Cardiac septum (tissue), 1 donor: ENCODE measurements at regions of chr7 and their contacts with region 1.

Region 1: DNA sequence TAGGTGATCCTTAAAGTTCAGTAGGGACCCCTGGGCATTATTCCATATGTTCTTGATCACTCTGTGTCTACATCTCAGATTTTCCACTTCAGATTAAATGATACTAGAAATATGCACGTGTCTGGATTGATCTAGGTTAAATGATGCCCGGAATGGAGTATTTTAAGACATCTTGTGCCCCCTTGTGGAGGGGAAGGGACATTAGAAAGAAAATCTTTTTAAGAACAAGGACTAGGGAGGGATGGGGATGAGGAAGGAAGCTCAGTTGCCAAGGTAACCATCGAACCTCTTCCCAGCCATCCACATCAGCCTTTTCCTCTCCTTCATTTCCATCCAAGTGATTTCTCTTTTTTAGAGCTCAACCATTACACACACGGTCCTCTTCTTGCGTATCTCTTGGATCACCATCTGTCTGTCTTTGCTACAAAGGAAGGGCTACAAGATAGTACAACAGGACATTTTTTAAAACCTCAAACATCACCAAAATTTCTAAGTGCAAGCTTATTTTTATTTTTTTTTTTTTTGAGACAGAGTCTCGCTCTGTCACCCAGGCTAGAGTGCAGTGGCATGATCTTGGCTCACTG is 40.5 kb downstream of the PRSS2 start:
- DNase-seq: no peak

Region 2: GRCh38 chr7:142632291-142633134 is 178.7 kb before region 1 on chr7:
- intact Hi-C with region 1: loop called (anchors 5 kb)
- DNase-seq: no peak

Region 3: DNA sequence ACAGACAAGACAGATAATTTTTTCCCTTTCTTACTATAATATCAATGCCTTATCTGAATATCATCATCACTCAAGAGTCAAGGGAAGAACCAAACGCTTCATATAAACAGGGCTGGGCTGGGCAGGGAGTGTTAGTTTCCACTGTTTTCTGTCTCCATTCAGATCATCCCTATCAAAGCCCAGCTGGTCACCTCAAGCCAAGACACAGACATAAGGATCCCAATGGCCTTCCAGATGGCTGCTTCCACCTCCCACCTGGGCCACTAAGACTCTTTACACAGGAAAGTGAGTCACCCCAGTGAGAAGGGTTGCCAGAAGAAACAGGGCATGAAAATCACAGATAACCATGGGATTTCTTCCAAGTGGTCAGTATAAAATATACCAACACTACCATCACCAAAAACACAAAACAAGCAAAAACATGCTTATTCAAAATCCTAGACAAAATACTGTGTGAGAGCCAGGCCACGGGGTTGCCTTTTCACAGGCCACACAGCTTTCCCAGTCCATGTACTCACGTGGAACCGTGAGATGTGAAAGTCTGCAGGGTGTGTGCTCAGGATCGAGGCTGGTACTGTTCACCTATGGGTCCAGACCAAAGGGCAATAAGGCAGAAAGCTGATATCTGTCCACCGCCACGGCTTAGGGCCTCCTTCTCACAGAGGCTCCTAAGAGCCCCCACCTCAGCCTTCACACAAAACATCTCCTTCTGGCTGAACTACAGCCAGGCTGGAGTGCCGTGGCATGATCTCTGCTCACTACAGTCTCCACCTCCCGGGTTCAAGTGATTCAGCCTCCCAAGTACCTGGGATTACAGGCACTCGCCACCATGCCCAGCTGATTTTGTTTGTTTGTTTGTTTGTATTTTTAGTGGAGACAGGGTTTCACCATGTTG is 56.3 kb before region 1 on chr7:
- intact Hi-C with region 1: no loop called
- DNase-seq: peak; percentile 51